ENCODE measurements at regions of chr2 and their contacts with region 1.

Region 1: DNA sequence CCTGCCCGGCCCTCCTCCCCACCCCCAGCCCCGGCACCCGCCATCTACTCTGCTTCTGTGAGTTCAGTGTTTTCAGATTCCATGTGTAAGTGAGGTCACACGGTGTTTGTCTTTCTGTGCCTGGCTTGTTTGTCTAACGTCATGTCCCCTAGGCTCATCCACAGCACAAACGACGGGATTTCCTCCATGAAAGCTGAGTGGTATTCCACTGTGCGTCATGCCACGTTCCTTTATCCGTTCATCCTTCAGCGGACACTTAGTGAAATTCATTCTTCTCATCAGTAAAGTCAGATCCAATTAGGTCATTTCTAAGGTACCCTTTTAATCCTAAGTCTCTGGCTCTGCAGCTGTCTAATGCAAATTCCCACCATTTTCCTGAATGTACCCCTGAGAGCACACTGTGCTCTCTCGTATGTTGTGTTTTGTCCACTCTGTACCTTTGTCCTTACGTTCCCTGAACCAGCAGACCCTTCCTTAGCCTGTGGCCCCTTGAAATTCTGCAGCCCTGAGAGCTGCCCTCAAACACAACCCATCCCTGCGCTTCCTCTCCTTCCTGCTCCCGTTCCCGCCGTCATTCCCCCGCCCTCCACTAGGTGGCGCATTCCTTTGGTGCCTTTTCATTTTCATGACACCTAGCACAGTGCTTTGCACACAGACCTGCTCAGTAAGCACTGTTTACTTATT is 44.1 kb downstream of the TRAPPC12 start:
- DNase-seq: peak; percentile 83
- H3K4me3 Mint-ChIP-seq: no peak overlapping the region
- H3K27ac Mint-ChIP-seq: no peak overlapping the region
- H3K4me1 Mint-ChIP-seq: peaks cover 5% of the 10 kb centered on the region
- H3K27me3 Mint-ChIP-seq: no peaks in the 10 kb centered on the region

Region 2: DNA sequence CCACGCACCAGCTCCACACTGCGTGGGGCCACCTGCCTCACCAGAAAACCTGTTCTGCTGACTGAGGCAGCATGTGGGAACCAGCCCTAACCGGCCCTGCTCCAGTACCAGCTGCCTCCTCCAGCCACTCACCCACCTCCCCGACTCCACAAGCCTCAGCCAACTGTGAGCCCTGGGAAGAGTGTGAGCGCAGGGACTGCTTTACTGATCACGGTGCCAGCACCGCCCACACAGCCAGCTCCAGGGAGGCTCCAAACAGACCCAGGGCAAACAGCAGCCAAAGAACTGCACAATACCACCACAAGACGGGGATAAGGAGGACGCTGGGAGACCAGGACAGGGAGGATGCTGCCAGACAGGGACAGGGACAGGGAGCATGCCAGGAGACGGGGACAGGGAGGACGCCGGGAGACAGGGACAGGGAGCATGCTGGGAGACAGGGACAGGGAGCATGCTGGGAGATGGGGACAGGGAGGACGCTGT is 74.4 kb before region 1 on chr2:
- CTCF ChIA-PET with region 1: no interaction called
- POLR2A ChIA-PET with region 1: no interaction called
- intact Hi-C with region 1: no loop called
- DNase-seq: no peak
- H3K4me3 Mint-ChIP-seq: no peak overlapping the region
- H3K27ac Mint-ChIP-seq: no peak overlapping the region
- H3K4me1 Mint-ChIP-seq: no peaks in the 10 kb centered on the region
- H3K27me3 Mint-ChIP-seq: no peaks in the 10 kb centered on the region

Region 3: GRCh38 chr2:3386448-3386958 is 37.1 kb before region 1 on chr2:
- CTCF ChIA-PET with region 1: interaction called, 10 read pairs
- POLR2A ChIA-PET with region 1: no interaction called
- intact Hi-C with region 1: no loop called
- DNase-seq: no peak
- H3K4me3 Mint-ChIP-seq: no peak overlapping the region
- H3K27ac Mint-ChIP-seq: no peak overlapping the region
- H3K4me1 Mint-ChIP-seq: peaks cover 8% of the 10 kb centered on the region
- H3K27me3 Mint-ChIP-seq: no peaks in the 10 kb centered on the region

Region 4: DNA sequence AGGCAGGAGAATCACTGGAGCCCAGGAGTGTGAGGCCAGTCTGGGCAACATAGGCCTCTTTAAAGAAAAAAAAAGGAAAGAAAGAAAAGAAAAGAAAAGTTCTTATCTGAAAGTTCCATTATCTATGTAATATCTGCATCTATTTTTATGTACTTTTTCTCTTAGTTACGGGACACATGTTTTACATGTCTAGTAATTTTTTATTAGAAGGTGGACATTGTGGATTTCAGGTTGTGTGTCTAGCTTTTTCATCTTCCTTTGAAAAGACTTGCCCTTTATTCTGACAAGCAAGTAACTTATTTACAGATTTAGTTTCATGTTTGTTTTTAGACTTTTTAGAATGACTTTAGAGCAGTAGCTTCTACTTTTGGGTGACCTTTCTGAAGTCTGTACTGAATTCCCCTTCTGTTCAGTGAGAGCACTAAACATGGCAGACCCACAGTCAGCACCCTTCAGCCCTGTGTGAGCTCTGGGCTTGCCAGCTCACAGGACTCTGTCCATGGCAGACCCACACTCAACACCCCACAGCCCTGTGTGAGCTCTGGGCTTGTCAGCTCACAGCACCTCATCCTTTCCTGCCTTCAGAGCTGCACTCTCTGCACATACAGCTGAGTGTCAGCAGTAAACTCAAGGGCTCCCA is 26.6 kb before region 1 on chr2:
- CTCF ChIA-PET with region 1: interaction called, 13 read pairs
- POLR2A ChIA-PET with region 1: no interaction called
- intact Hi-C with region 1: no loop called
- DNase-seq: no peak
- H3K4me3 Mint-ChIP-seq: no peak overlapping the region
- H3K27ac Mint-ChIP-seq: no peak overlapping the region
- H3K4me1 Mint-ChIP-seq: peaks cover 8% of the 10 kb centered on the region
- H3K27me3 Mint-ChIP-seq: no peaks in the 10 kb centered on the region

Region 5: DNA sequence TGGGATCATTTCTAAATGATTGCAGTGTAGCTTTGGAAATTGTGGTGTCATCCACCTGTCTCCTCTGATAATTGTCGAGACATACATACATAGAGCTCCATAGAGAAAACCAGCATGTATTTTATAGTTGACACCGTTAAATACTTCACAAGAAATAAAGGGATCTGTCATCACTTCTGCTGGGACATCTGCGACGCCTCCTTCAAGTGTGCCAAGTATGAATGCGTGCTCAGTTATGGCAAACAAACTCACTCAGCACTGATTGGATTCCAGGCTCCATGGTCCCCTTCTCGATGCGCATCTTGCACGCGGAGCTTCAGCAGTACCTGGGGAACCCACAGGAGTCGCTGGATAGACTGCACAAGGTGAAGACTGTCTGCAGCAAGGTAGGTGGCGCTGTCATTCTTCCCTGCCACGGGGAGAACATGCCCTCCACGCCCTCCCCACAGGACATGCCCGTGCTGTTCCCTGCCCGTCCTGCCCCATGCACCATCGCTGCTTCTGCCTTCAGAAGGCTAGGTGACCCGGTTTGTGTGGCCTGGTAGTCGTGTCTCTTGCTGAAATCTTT is 20.0 kb after region 1 on chr2:
- CTCF ChIA-PET with region 1: interaction called, 43 read pairs
- POLR2A ChIA-PET with region 1: no interaction called
- intact Hi-C with region 1: no loop called
- DNase-seq: no peak
- H3K4me3 Mint-ChIP-seq: no peak overlapping the region
- H3K27ac Mint-ChIP-seq: no peak overlapping the region
- H3K4me1 Mint-ChIP-seq: peaks cover 17% of the 10 kb centered on the region
- H3K27me3 Mint-ChIP-seq: no peaks in the 10 kb centered on the region

Region 6: DNA sequence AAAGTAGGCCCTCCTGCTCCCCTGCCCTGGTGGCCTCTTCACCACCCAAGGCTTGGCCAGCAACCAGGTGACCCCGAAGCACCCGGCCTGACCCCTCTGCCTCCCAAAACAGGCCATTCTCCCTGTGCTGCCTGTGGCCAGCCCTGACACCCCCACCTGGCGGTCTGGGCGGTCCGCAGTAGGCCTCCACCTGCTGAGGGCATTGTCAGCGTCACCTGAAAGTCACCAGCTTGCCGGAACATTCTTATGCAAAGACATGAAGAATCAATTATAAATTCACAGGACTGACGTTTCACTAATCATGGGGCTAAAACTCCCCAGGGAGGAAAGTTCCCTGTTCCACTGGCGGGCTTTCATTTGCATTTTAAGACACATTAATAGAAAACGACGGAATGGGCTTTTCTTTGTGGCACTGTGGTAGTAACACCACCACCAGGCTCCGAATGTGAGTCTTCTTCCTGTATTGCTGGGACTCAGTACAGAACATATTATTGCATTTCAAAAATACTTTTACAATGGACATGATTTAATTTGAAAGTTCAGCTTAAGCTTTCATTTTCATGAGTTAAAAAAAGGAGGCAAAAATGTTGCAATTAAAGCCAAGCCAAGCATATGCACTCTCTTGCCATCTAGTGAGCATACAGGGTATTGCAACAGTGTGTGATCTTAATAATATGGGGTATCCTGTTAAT is 38.3 kb after region 1 on chr2:
- CTCF ChIA-PET with region 1: interaction called, 32 read pairs
- POLR2A ChIA-PET with region 1: no interaction called
- intact Hi-C with region 1: loop called (anchors 1 kb)
- DNase-seq: no peak
- H3K4me3 Mint-ChIP-seq: no peak overlapping the region
- H3K27ac Mint-ChIP-seq: peak overlapping the region; percentile 69
- H3K4me1 Mint-ChIP-seq: peaks cover 8% of the 10 kb centered on the region
- H3K27me3 Mint-ChIP-seq: no peaks in the 10 kb centered on the region